BJ (cell line): ENCODE measurements at regions of chr2 and their contacts with region 1.

Region 1: DNA sequence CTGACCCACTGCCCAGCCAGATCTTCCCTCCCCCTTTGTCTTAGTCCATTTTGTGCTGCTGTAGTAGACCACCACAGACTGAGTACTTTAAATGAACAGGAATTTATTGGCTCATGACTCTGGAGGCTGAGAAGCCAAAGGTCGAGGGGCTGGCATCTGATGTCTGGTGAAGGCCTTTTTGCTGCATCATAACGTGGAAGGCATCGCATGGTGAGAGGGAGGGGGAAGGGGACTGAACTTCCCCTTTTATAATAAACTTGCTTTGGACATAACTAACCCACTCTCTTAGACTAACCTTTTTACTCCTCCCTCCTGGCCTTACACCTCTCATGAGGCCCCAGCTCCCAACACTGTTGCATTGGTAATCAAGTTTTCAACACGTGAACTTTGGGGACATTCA is 83.8 kb downstream of the MAP4K4 start:
- DNase-seq: no peak
- H3K4me3 ChIP-seq: no peak overlapping the region
- H3K27me3 ChIP-seq: no peaks in the 10 kb centered on the region
- CTCF ChIP-seq: no peak

Region 2: GRCh38 chr2:101387151-101387807 is 394.0 kb before region 1 on chr2 and contains the start of gene CREG2:
- CTCF ChIA-PET with region 1: no interaction called
- POLR2A ChIA-PET with region 1: interaction called, 14 read pairs
- DNase-seq: no peak
- H3K4me3 ChIP-seq: peak within 1 kb of the TSS; percentile 39
- H3K27me3 ChIP-seq: peaks cover 12% of the 10 kb centered on the region
- CTCF ChIP-seq: peak; percentile 34
- polyA plus RNA-seq, gene CREG2: not detected in 2 replicates

Region 3: GRCh38 chr2:101419096-101419663 is 362.1 kb before region 1 on chr2:
- CTCF ChIA-PET with region 1: interaction called, 10 read pairs
- POLR2A ChIA-PET with region 1: no interaction called
- DNase-seq: no peak
- H3K4me3 ChIP-seq: no peak overlapping the region
- H3K27me3 ChIP-seq: no peaks in the 10 kb centered on the region
- CTCF ChIP-seq: peak; percentile 78

Region 4: DNA sequence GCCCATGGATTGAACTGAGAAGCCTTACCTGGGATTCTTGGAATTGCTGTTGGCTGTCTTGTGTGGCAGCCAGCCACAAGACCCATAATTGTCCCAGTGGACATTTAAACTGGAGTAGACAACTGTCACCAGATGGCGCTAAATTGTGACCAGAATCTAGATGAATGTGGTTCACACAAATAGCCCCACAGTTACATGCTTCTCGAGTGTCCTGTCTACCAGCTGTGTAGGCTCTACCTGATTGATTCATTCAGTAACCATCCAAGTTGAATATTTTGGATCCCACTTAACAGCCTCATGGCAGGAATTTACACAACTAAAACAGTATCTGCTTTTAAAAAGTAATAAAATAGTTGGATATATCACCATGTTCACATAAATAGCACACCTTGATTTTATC is 10.6 kb before region 1 on chr2:
- CTCF ChIA-PET with region 1: interaction called, 15 read pairs
- POLR2A ChIA-PET with region 1: no interaction called
- DNase-seq: no peak
- H3K4me3 ChIP-seq: no peak overlapping the region
- H3K27me3 ChIP-seq: no peaks in the 10 kb centered on the region
- CTCF ChIP-seq: peak; percentile 13; the same call in 1 of the 2 replicates